Activated naive CD4-positive, alpha-beta T cell treated with anti-CD3 and anti-CD28 coated beads, Interleukin-2, amount 10 ng/mL, durations not matched to agents 7 days and 5 days (primary cell): ENCODE measurements at regions of chr17 and their contacts with region 1.

Region 1: GRCh38 chr17:74199306-74200092 is 4.0 kb upstream of the RPL38 start:
- DNase-seq: peak; percentile 72
- H3K4me3 Mint-ChIP-seq: no peak overlapping the region
- H3K27ac Mint-ChIP-seq: no peak overlapping the region
- H3K4me1 Mint-ChIP-seq: peaks cover 19% of the 10 kb centered on the region
- H3K27me3 Mint-ChIP-seq: peaks cover 89% of the 10 kb centered on the region

Region 2: GRCh38 chr17:74089869-74090464 is 109.5 kb before region 1 on chr17:
- CTCF ChIA-PET with region 1: interaction called, 28 read pairs
- DNase-seq: peak; percentile 79
- H3K4me3 Mint-ChIP-seq: no peak overlapping the region
- H3K27ac Mint-ChIP-seq: no peak overlapping the region
- H3K4me1 Mint-ChIP-seq: no peaks in the 10 kb centered on the region
- H3K27me3 Mint-ChIP-seq: peaks cover 42% of the 10 kb centered on the region

Region 3: DNA sequence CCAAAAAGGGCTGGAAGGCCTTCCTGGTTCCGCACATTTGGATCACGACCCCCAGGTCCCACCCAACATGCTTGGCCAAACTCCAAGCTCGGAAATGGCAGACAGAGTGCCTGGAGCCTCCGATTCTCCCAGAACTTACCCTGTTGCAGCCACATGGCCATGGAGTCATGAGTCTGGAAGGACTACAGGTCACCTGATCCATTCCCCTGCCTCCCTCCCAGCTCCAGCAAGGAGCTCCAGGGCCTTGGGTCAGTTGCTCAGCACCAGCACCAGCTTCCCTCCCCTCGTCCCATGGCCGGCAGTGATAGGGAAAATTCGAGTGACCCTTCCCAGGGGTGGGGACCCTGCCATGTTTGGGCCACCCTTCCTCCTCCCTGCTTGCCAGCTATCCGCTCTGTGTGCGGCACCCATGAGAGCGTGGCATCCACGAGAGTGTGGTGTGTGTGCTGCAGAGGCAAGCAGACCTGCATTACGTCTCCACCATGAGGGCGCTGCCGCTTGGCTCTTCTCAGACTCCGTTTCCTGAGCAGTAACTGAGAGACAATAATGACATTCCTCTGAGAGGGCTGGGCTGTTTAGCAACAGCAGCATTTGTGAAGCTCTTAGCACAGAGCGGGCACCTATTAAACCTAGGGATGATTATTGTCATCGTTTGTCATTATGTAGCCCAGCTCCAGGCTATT is 17.3 kb before region 1 on chr17:
- CTCF ChIA-PET with region 1: interaction called, 13 read pairs
- DNase-seq: no peak
- H3K4me3 Mint-ChIP-seq: no peak overlapping the region
- H3K27ac Mint-ChIP-seq: no peak overlapping the region
- H3K4me1 Mint-ChIP-seq: no peaks in the 10 kb centered on the region
- H3K27me3 Mint-ChIP-seq: peaks cover 39% of the 10 kb centered on the region

Region 4: GRCh38 chr17:74240618-74241205 is 41.2 kb after region 1 on chr17:
- CTCF ChIA-PET with region 1: no interaction called
- DNase-seq: no peak
- H3K4me3 Mint-ChIP-seq: no peak overlapping the region
- H3K27ac Mint-ChIP-seq: no peak overlapping the region
- H3K4me1 Mint-ChIP-seq: no peaks in the 10 kb centered on the region
- H3K27me3 Mint-ChIP-seq: no peaks in the 10 kb centered on the region